ENCODE measurements at regions of chr11 and their contacts with region 1.

Region 1: DNA sequence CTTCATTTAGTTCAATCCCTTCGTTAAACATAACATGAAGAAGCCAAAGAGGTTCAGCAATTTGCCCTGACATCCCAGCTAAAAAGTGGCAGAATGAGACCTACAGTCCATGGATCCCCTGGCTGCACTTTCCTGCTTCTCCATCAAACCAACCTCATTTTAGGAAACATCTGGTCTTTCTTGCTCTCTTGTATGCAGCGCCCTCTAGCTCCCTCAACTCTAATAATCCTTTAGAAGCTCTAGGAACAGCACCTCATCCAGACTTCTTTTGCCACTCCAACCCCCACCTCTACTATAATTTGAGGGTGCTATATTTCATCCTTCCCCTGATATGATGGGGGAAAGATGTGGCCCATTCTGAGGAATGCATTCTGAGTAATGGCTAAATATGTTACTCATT is 7.4 kb downstream of the CNTF start:
- DNase-seq: peak; percentile 24
- H3K4me3 ChIP-seq: no peak overlapping the region
- H3K27ac ChIP-seq: no peak overlapping the region
- H3K27me3 ChIP-seq: no peaks in the 10 kb centered on the region
- CTCF ChIP-seq: peak; percentile 73

Region 2: GRCh38 chr11:58567889-58568512 is 61.9 kb before region 1 on chr11:
- CTCF ChIA-PET with region 1: interaction called, 64 read pairs
- POLR2A ChIA-PET with region 1: no interaction called
- DNase-seq: no peak
- H3K4me3 ChIP-seq: no peak overlapping the region
- H3K27ac ChIP-seq: no peak overlapping the region
- H3K27me3 ChIP-seq: no peaks in the 10 kb centered on the region
- CTCF ChIP-seq: peak; percentile 89

Region 3: GRCh38 chr11:58586998-58587397 is 42.9 kb before region 1 on chr11:
- CTCF ChIA-PET with region 1: interaction called, 19 read pairs
- POLR2A ChIA-PET with region 1: interaction called, 7 read pairs
- DNase-seq: no peak
- H3K4me3 ChIP-seq: no peak overlapping the region
- H3K27ac ChIP-seq: no peak overlapping the region
- H3K27me3 ChIP-seq: no peaks in the 10 kb centered on the region
- CTCF ChIP-seq: no peak

Region 4: GRCh38 chr11:58609723-58610122 is 20.1 kb before region 1 on chr11:
- CTCF ChIA-PET with region 1: interaction called, 15 read pairs
- POLR2A ChIA-PET with region 1: no interaction called
- DNase-seq: no peak
- H3K4me3 ChIP-seq: no peak overlapping the region
- H3K27ac ChIP-seq: no peak overlapping the region
- H3K27me3 ChIP-seq: no peaks in the 10 kb centered on the region
- CTCF ChIP-seq: no peak

Region 5: DNA sequence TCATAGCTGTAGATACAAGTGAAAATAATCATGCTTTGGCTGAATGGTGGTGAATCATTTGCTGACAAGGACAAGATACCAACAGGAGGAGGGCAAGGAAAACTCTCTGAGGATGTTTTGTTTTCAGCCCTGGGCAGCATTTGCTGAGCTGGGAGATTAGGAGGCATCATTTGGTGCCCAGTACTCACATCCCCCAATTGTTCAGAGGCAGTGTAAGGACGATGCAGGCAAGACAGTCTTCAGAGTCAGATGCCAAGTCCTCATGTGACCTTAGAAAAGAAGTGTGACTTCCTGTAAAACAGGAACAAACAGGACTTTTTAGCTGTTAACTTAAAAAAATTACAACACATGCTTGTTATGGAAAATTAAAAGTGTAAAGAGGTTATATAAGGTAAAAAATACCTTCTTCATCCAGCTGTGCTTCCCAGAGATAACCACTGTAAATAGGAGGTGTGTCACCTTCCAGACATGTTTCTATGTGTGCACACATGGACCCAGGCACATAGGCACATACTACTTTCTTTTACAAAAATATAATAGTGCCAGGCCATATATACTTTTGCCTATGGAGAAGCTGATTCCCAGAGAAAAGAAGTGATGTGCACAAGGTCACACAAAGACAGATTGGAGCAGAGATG is 10.6 kb after region 1 on chr11:
- CTCF ChIA-PET with region 1: interaction called, 40 read pairs
- POLR2A ChIA-PET with region 1: interaction called, 7 read pairs
- DNase-seq: no peak
- H3K4me3 ChIP-seq: no peak overlapping the region
- H3K27ac ChIP-seq: no peak overlapping the region
- H3K27me3 ChIP-seq: peaks cover 4% of the 10 kb centered on the region
- CTCF ChIP-seq: no peak

Region 6: DNA sequence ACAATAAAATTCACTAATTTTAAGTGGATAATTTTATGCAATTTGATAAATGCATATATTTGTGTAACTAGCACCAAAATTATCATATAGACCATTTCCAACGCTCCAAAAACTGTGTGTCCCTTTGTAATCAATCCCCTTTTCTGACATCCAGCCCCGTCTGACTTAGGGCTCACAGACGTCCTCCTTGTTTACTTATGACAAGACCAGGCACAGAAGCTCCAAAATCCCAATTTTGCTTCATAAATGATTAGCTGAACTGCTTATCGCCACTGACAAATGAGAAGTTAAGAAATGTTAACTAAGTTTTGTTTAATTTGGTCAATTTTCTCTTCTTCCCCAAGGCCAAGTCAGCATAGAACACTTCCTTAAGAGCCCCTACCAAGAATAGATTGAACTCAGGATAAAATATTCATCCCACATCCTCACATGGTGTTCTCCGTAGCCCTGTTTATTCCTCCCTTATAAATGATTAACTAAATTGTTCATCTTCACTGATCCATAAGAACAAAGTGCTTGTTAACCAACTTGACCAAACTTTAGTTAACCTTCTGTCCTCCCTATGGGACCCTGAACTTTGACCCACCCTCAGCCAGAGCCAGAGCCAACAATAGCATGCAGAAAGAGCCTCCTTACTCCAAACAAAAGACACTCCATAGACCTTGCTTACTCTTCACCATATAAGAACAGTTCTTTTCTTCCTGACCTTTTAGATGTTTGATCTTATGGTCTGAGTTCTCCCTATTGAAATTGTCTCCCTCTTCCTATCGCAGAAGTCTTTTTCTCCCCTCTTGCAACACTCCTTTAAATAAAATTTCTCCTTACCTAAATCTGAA is 132.6 kb after region 1 on chr11:
- CTCF ChIA-PET with region 1: no interaction called
- POLR2A ChIA-PET with region 1: no interaction called
- DNase-seq: no peak
- H3K4me3 ChIP-seq: no peak overlapping the region
- H3K27ac ChIP-seq: no peak overlapping the region
- H3K27me3 ChIP-seq: no peaks in the 10 kb centered on the region
- CTCF ChIP-seq: no peak

Region 7: DNA sequence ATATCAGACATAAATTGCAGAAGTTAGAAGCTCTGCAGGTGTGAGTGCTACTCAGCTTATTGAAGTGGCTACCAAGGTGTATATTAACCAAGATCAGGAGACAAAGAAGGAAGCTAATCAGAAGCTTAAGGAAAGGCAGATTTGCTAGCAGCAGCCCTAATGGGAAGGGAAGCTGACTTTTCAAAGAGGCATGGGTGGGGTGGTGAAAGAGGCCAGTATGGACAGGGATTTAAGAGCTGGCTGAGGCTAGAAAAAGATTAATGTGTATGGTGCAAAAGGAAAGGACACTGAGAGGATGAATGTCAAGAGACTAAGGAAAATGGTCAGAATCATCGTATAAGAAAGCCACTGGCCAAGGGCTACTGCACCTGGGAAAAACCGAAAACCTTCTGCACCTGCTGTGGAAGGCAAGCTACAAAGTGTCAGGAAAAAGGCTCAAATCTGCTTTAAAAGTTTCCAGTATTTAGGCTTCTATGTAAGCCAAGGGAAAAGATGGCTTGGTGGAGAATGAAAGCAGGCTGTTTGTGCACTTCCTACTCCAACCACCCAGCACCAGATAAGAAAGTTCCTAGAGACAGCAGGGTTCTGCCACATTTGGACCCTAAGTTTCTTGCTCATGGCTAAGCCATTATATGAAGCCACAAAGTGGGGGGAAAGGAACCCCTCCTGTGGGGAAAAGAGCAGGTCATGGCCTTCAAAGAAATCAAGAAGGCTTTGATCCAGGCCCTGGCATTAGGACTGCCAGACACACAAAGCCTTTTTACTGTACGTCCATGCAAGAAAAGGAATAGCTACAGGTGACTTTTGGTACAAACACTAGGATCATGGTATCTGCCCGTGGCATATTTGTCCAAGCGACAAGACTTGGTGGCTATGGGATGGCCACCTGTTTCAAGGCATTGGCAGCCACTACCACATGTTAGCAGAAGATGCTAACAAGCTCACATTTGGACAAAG is 142.8 kb after region 1 on chr11:
- CTCF ChIA-PET with region 1: no interaction called
- POLR2A ChIA-PET with region 1: no interaction called
- DNase-seq: no peak
- H3K4me3 ChIP-seq: no peak overlapping the region
- H3K27ac ChIP-seq: no peak overlapping the region
- H3K27me3 ChIP-seq: no peaks in the 10 kb centered on the region
- CTCF ChIP-seq: no peak

Region 8: GRCh38 chr11:58905721-58906477 is 276.0 kb after region 1 on chr11:
- CTCF ChIA-PET with region 1: interaction called, 10 read pairs
- POLR2A ChIA-PET with region 1: no interaction called
- DNase-seq: peak; percentile 71
- H3K4me3 ChIP-seq: peak overlapping the region; percentile 75
- H3K27ac ChIP-seq: peak overlapping the region; percentile 65
- H3K27me3 ChIP-seq: no peaks in the 10 kb centered on the region
- CTCF ChIP-seq: peak; percentile 72